Right ventricle myocardium inferior (tissue), 1 donor: ENCODE measurements at regions of chr1 and their contacts with region 1.

Region 1: DNA sequence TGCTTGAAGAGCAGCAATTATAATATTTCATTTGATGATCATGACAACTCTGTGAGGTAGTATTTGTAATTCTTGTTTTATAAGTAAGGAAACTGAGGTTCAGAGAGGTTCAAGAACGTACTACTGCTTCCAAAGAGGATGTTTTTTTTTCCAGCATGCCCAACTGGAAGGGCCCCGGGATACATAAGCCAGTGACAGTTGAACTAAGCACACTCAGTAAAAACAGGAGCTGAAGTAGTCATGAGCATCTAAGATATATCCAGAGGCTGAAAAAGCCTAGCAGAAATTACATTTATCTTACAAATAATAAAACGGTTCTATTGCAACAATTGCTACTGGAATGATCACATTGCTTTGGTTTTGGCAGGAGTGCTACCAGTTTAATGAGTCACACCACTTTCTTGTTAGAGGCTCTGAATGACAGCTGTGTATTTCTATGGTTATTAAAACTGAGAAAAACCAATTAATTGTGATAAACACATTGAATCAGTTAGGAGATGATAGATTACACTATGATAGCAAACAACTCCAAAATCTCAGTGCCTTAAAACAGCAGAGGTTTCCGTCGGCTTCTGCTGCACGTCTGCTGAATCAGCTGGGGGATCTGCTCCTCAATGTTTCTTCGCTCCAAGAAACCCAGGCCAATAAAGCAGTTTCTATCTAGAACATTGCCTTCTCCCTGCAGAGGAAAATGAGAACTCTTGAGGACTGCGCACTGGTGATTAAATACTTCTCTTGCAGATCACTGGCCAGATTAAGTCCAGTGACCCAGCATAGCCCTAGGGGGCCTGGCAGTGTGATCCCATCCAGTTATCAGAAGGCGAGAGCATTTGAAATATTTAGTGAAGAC is 522.7 kb downstream of the PLPP3 start:
- DNase-seq: no peak
- ATAC-seq: peak; percentile 39

Region 2: DNA sequence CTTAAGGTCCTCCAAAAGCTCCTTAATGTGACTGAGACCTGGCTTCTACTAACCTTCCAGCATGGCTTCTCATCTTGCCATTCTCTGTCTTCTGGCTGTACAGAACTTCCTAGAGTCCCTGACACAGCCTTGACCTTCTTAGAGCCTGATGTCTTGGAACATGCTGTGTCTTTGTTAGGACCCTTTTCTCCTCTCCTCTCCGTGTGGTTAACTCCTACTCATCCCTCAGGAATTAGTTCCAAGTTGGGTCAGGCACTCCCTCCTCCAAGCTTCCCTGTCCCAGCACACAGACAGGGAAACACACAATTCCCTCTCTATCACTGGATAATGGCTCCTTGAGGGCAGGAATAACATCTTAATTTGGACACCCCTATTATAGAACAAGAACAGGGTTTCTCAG is 566.1 kb before region 1 on chr1:
- intact Hi-C with region 1: no loop called
- DNase-seq: no peak
- ATAC-seq: no peak

Region 3: DNA sequence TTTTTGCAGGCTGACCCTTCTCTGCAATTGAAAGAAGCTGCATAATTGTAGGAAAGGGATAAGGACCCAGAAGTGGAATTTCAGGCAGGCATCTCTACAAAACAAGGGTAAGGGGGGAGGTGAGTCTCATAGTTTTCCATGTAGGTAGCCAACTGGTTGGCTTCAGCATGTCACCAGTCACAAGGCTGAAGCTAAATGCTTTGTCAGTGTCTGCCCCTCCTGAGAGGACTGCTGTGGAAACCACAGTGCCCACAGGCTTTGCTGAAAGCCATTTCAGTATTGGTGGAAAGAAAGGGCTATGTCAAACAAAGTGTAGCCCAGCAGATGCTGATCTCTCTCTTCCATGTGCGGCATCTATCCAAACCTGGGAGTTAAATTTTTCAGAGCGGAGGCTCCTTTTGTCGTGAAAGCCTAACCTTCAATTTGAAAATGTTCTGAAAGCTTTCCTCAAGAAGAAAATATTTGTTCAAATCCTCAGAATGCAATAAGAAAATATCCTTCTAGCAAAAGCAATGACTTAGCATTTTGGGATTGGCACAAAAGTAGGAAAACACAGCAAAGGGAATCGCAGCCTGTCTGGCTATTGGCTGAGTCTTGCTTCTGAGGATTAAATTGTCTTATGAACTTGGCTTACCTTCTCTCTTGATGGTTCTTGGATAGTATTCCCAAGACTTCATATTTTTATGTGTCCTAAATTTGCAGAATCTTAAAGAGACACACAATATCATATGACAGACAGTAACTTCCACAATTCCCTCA is 69.0 kb before region 1 on chr1:
- intact Hi-C with region 1: loop called (anchors 10 kb)
- DNase-seq: no peak
- ATAC-seq: peak; percentile 65

Region 4: DNA sequence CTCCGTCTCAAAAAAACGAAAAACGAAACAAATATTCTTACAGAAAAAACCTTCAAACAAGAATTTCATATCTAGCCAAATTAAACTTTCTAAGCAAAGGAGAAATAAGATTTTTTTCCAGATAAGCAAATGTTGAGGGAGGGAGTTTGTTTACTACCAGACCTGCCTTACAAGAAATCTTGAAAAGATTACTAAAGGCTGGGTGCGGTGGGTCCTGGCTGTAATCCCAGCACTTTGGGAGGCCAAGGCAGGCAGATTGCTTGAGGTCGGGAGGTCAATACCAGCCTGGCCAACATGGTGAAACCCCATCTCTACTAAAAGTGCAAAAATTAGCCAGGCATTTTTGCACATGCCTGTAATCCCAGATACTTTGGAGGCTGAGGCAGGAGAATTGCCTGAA is 44.7 kb before region 1 on chr1:
- intact Hi-C with region 1: no loop called
- DNase-seq: no peak
- ATAC-seq: no peak

Region 5: DNA sequence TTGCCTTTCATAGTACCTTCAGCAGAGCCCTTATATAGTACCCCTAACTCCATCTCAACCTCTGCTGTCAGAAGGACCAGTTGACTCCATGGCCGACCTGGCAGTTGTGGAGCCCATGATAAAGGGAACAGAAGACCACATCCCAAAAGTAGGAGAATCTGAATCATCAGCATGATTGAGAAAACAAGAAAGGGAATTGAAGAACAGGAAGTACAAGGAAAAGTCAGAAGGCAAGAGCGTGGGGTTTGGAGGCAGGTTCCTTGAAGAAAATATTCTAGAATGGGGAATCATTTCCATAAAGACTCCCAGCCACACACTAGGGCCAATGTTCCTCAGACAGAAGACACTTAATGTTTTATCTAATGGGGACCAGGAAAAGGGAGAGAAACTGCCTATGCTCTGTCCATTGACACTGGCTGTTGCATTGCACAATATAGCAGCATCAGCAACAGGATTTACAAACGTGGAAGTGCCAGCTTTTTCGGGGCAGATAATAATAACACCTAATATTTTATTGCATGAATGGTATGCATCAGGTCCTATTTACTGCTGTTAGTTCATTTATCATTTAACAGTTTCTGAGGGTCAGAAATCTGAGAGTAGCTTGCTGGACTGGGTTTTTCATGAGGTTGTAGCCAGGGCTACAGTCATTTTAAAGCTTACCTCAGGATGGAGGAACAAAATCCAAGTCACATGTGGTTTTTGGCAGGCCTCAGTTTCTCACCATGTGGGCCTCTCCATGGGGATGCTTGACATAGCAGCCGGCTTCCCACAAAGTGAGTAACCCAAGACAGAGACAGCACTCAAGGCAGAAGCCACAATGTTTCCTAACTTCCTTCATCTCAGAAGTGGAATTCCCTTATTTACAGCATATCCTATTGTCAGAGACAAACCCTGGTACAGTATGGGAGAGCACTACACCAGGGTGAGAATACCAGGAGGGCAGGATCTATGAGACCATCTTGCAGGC is 39.3 kb after region 1 on chr1:
- intact Hi-C with region 1: no loop called
- DNase-seq: no peak
- ATAC-seq: peak; percentile 79

Region 6: DNA sequence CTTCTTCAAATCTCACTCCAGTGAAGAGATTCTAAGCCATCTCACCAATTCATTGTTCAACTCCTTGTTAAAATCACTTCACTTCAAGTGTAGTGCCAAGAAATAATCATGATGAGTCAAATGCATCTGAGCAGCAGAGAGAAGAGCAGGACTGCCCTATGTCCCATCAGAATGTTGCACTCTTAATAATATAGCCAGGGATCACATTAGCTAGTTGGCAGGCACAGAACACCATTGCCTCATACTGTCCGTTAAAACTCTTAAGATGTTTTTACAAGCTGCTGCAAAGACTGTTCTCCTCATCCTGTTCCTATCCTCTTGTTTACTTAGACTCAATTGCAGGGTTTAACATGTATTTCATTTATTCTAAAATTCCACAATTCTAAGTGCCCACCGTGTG is 89.8 kb after region 1 on chr1:
- intact Hi-C with region 1: loop called (anchors 5 kb)
- DNase-seq: no peak
- ATAC-seq: peak; percentile 77